Mammary epithelial cell (primary cell): ENCODE measurements at regions of chr1 and their contacts with region 1.

Region 1: GRCh38 chr1:235304549-235305451 is 23.2 kb downstream of the ARID4B start:
- DNase-seq: no peak
- H3K4me3 ChIP-seq: no peak overlapping the region
- H3K27ac ChIP-seq: no peak overlapping the region
- H3K4me1 ChIP-seq: no peaks in the 10 kb centered on the region
- H3K27me3 ChIP-seq: no peaks in the 10 kb centered on the region
- CTCF ChIP-seq: no peak

Region 2: GRCh38 chr1:235190431-235190830 is 114.4 kb before region 1 on chr1:
- CTCF ChIA-PET with region 1: interaction called, 19 read pairs
- dilution Hi-C with region 1: no loop called
- in situ Hi-C with region 1: no loop called
- intact Hi-C with region 1: no loop called
- DNase-seq: no peak
- H3K4me3 ChIP-seq: no peak overlapping the region
- H3K27ac ChIP-seq: no peak overlapping the region
- H3K4me1 ChIP-seq: no peaks in the 10 kb centered on the region
- H3K27me3 ChIP-seq: no peaks in the 10 kb centered on the region
- CTCF ChIP-seq: no peak

Region 3: GRCh38 chr1:235239851-235240250 is 64.9 kb before region 1 on chr1:
- CTCF ChIA-PET with region 1: no interaction called
- dilution Hi-C with region 1: no loop called
- in situ Hi-C with region 1: no loop called
- intact Hi-C with region 1: no loop called
- DNase-seq: no peak
- H3K4me3 ChIP-seq: no peak overlapping the region
- H3K27ac ChIP-seq: no peak overlapping the region
- H3K4me1 ChIP-seq: no peaks in the 10 kb centered on the region
- H3K27me3 ChIP-seq: no peaks in the 10 kb centered on the region
- CTCF ChIP-seq: no peak

Region 4: GRCh38 chr1:235279694-235280093 is 25.1 kb before region 1 on chr1:
- CTCF ChIA-PET with region 1: interaction called, 10 read pairs
- dilution Hi-C with region 1: no loop called
- in situ Hi-C with region 1: no loop called
- intact Hi-C with region 1: no loop called
- DNase-seq: no peak
- H3K4me3 ChIP-seq: no peak overlapping the region
- H3K27ac ChIP-seq: no peak overlapping the region
- H3K4me1 ChIP-seq: no peaks in the 10 kb centered on the region
- H3K27me3 ChIP-seq: no peaks in the 10 kb centered on the region
- CTCF ChIP-seq: no peak